Heart right ventricle (tissue), 16 donors: ENCODE measurements at regions of chr9 and their contacts with region 1.

Region 1: DNA sequence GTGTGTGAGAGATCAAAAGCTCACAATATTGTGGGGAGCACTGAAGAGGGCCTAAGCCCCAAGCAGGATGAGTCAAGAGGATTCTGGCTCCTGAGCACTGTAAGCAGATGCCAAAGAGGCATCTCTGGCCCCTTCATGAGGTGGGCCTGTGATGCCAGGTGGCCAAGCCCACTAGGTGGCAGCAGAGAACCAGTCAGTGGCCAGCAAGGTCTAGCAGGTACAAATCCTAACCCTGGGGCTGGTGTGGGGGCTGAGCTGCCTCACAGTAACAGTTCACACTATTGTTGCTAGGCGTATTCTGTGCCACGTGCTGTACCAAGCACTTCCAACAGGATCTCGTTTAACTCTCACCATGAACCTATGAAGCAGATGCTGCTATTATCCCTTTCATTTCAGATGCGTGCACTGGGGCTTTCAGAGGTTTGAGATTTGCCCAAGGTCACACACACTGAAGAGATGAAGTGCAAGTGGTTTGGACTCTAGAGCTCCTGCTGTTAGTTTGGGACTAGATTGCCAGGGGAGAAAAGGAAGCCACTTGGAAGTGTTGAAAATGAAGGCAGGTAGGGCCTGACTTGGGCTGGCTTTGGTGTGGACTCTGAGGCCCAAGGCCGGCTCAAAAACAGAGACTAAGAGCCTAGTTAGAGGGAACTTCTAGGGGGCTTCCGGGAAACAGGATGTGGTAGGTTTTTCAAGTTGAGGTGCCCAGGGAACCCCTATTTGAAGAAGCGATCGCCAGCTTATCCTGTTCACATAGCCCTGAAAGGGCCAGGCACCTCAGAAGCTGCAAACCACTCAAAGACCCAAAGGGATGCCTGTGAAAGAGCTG is 4.4 kb upstream of the MLANA start:
- DNase-seq: peak; percentile 68
- ATAC-seq: peak; percentile 68 to 90 (median 88)
- H3K4me3 ChIP-seq: no peak overlapping the region
- H3K27ac ChIP-seq: no peak overlapping the region
- H3K4me1 ChIP-seq: no peaks in the 10 kb centered on the region
- H3K27me3 ChIP-seq: no peaks in the 10 kb centered on the region
- CTCF ChIP-seq: peak; percentile 64 to 94 (median 89)

Region 2: GRCh38 chr9:6055213-6055612 is 168.9 kb after region 1 on chr9:
- intact Hi-C with region 1: loop called in 8 of 10 experiments (anchors 1 to 10 kb)
- DNase-seq: peak in 1 of 2 donors; percentile 32
- ATAC-seq: peak in 7 of 8 donors; percentile 34 to 81 (median 64)
- H3K4me3 ChIP-seq: no peak overlapping the region
- H3K27ac ChIP-seq: no peak overlapping the region
- H3K4me1 ChIP-seq: peaks cover 0 to 5% (median 0%) of the 10 kb centered on the region in 9 donors
- H3K27me3 ChIP-seq: peaks cover 0 to under 1% (median 0%) of the 10 kb centered on the region in 7 donors
- CTCF ChIP-seq: peak; percentile 10 to 62 (median 58)